CD4-positive, alpha-beta memory T cell (primary cell): ENCODE measurements at regions of chr5 and their contacts with region 1.

Region 1: DNA sequence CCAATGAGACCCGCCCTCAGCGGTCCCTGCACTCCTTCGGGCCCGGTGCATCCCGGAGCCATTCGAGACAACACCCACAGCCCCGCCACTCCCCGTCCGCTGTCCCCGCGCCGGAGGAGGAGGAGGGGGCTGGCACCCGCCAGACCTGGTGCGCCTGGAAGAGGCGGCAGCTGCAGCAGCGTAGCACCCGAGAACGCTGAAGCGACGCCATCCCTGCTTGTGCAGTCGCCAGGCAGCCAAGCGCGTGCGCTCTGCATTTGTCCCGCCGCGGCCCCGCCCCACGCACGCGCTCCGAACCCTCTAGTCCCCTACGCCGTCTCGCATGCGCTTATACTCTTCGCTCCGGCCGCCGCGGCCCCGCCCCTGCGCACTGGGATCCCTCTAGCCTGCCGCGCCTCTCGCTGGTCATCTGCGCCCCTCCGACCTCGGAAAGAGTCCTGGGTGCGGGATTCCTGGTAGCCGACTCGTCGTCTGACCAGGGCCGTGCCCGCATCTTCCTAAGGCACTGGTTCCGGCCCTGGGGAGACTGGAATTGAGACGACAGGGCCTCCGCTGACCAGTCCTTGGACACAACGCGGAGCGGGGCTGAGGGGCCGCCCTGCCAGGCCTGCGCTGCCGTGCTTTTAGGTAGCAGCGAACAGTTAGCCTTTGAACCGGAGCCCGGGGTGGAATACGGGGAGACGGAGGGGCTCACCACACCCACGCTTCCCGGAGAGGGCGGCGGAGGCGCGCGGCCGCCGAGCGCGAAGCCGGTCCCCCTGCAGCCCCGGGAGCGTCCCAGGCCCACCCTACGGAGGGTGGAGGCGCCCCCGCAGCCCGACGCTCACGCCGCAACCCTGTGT is at the start of gene MRNIP:
- DNase-seq: peak; percentile 83 to 90 (median 86)
- H3K4me3 ChIP-seq: peak within 1 kb of the TSS; percentile 95 to 96
- H3K4me3 Mint-ChIP-seq: peak within 1 kb of the TSS; percentile 94 to 98 (median 97)
- H3K27ac ChIP-seq: peak within 1 kb of the TSS; percentile 66
- H3K27ac Mint-ChIP-seq: peak within 1 kb of the TSS; percentile 87 to 94 (median 92)
- H3K4me1 ChIP-seq: peaks cover 12% of the 10 kb centered on the region
- H3K4me1 Mint-ChIP-seq: peaks cover 7 to 30% (median 12%) of the 10 kb centered on the region in 4 donors
- H3K27me3 ChIP-seq: no peaks in the 10 kb centered on the region
- H3K27me3 Mint-ChIP-seq: no peaks in the 10 kb centered on the region
- total RNA-seq, gene MRNIP: 125 to 129 TPM

Region 2: GRCh38 chr5:179113945-179114641 is 744.7 kb before region 1 on chr5:
- CTCF ChIA-PET with region 1: no interaction called
- POLR2A ChIA-PET with region 1: no interaction called
- intact Hi-C with region 1: no loop called
- DNase-seq: no peak
- H3K4me3 ChIP-seq: no peak overlapping the region
- H3K4me3 Mint-ChIP-seq: no peak overlapping the region
- H3K27ac ChIP-seq: no peak overlapping the region
- H3K27ac Mint-ChIP-seq: no peak overlapping the region
- H3K4me1 ChIP-seq: no peaks in the 10 kb centered on the region
- H3K4me1 Mint-ChIP-seq: no peaks in the 10 kb centered on the region
- H3K27me3 ChIP-seq: no peaks in the 10 kb centered on the region
- H3K27me3 Mint-ChIP-seq: no peaks in the 10 kb centered on the region

Region 3: DNA sequence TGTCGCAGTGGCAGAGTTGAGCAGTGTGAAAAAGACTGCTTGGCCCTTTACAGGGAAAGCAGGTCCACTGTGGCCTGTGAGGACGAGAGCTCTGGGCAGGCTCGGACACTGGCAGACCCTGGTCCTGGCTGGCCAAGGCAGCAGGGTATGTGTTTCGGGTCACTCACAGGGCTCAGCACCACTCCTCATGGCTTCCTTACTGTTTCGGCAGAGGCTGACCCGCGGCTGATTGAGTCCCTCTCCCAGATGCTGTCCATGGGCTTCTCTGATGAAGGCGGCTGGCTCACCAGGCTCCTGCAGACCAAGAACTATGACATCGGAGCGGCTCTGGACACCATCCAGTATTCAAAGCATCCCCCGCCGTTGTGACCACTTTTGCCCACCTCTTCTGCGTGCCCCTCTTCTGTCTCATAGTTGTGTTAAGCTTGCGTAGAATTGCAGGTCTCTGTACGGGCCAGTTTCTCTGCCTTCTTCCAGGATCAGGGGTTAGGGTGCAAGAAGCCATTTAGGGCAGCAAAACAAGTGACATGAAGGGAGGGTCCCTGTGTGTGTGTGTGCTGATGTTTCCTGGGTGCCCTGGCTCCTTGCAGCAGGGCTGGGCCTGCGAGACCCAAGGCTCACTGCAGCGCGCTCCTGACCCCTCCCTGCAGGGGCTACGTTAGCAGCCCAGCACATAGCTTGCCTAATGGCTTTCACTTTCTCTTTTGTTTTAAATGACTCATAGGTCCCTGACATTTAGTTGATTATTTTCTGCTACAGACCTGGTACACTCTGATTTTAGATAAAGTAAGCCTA is 22.4 kb before region 1 on chr5:
- CTCF ChIA-PET with region 1: interaction called, 3 read pairs
- POLR2A ChIA-PET with region 1: interaction called, 4 read pairs
- intact Hi-C with region 1: loop called (anchors 1 kb)
- DNase-seq: peak; percentile 48 to 84 (median 64)
- H3K4me3 ChIP-seq: peak overlapping the region in 1 of 2 donors; percentile 30
- H3K4me3 Mint-ChIP-seq: peak overlapping the region in 7 of 8 donors; percentile 37 to 74 (median 65)
- H3K27ac ChIP-seq: peak overlapping the region; percentile 57
- H3K27ac Mint-ChIP-seq: peak overlapping the region; percentile 82 to 96 (median 93)
- H3K4me1 ChIP-seq: peaks cover 21% of the 10 kb centered on the region
- H3K4me1 Mint-ChIP-seq: peaks cover 14 to 26% (median 17%) of the 10 kb centered on the region in 4 donors
- H3K27me3 ChIP-seq: no peaks in the 10 kb centered on the region
- H3K27me3 Mint-ChIP-seq: no peaks in the 10 kb centered on the region

Region 4: DNA sequence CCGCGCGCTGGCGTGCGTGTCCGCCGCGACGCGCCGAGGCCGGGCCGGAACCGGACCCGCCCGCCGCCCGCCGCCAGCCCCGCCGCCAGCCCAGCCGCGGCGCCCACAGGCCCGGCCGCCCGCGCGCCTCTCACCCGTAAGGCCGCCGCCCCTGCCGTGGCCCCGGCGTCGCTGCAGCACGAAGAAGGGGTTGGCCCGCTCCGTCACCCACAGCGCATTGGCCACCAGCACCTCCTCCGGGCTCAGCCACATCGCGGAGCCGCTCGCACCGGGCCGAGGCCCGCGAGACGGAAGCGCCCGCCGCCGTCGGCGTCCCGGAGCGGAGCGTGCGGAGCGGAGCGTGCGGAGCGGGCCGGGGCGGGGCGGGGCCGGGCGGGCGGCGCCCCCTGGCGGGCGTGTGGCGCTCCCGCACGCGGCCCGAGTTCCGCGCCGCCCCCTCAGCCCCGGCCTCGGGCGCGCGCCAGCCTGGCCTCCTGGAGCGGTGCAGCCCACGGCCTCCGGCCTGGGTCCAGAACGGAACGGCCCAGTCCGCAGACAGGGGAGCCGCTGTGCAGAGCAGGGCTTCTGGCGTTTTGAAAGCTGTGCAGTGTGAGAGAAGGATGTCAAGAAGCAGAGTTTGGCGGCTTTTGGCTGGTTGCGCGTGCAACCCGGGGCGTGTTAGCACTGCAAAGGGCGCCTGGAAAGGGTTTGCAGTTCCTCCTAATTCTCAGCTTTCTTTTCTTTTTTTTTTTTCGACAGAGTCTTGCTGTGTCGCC is 48.9 kb after region 1 on chr5 and contains the start of gene TBC1D9B:
- CTCF ChIA-PET with region 1: interaction called, 3 read pairs
- POLR2A ChIA-PET with region 1: no interaction called
- intact Hi-C with region 1: loop called (anchors 2 kb)
- DNase-seq: peak; percentile 76 to 82 (median 78)
- H3K4me3 ChIP-seq: peak within 1 kb of the TSS in 1 of 2 donors; percentile 57
- H3K4me3 Mint-ChIP-seq: peak within 1 kb of the TSS; percentile 85 to 92 (median 88)
- H3K27ac ChIP-seq: peak within 1 kb of the TSS; percentile 54
- H3K27ac Mint-ChIP-seq: peak within 1 kb of the TSS; percentile 78 to 94 (median 84)
- H3K4me1 ChIP-seq: peaks cover 23% of the 10 kb centered on the region
- H3K4me1 Mint-ChIP-seq: peaks cover 7 to 38% (median 15%) of the 10 kb centered on the region in 4 donors
- H3K27me3 ChIP-seq: no peaks in the 10 kb centered on the region
- H3K27me3 Mint-ChIP-seq: no peaks in the 10 kb centered on the region
- total RNA-seq, gene TBC1D9B: 84.3 to 85.0 TPM